ENCODE measurements at regions of chr6 and their contacts with region 1.

Region 1: GRCh38 chr6:159778542-159779103 is 10.8 kb downstream of the TCP1 start:
- DNase-seq: no peak
- ATAC-seq: no peak
- H3K4me3 Mint-ChIP-seq: no peak overlapping the region
- H3K27ac Mint-ChIP-seq: no peak overlapping the region
- H3K4me1 Mint-ChIP-seq: no peaks in the 10 kb centered on the region
- H3K27me3 Mint-ChIP-seq: no peaks in the 10 kb centered on the region
- CTCF ChIP-seq: no peak

Region 2: DNA sequence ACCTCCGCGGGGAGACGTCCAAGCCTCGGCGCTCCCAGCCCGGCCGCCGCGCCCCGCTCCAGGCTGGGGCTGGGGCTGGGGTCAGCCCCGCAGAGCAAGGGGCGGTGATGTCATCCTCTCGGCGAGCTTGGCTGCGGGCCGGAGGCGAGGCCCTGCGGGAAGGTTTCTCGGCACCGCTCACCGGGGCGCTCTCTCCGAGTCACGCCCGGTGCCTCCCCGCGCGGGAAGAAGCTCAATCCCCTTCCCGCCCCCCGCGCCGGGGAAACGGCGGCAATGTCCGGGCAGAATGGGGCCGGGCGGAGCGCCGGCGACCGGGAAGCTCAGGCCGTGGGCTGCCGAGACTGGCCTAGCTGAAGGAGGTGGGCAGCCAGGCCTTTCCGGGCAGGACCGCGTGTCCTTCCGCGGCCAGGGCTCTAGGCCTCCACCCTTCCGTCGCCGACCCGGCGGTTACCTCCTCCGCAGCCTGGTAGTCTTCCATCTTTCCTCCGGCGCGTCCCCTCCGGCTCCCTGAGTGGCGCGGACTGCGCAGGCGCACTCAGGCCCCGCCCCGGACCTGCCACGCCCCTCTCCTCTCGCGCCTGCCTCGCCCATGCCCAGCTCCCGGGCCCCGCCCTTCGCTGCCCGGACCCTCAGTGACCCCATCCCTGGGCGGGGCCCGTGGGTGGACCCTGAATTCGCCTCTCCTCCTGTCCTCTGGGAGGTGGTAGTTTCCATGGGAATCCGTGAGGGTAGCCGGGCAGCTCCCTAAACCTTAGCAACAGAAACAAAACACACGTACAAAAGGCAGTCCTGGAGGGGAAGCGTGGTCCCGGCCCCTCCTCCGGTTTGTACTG is 1134.2 kb before region 1 on chr6 and contains the start of gene DYNLT1:
- CTCF ChIA-PET with region 1: no interaction called
- POLR2A ChIA-PET with region 1: no interaction called
- intact Hi-C with region 1: no loop called
- DNase-seq: peak; percentile 97
- ATAC-seq: peak; percentile 68
- H3K4me3 Mint-ChIP-seq: peak within 1 kb of the TSS; percentile 95
- H3K27ac Mint-ChIP-seq: peak within 1 kb of the TSS; percentile 85
- H3K4me1 Mint-ChIP-seq: peaks cover 52% of the 10 kb centered on the region
- H3K27me3 Mint-ChIP-seq: no peaks in the 10 kb centered on the region
- CTCF ChIP-seq: no peak
- total RNA-seq, gene DYNLT1: 37.7 and 43.9 TPM in 2 replicates

Region 3: GRCh38 chr6:159422041-159422984 is 356.3 kb before region 1 on chr6:
- CTCF ChIA-PET with region 1: no interaction called
- POLR2A ChIA-PET with region 1: no interaction called
- intact Hi-C with region 1: no loop called
- DNase-seq: no peak
- ATAC-seq: no peak
- H3K4me3 Mint-ChIP-seq: no peak overlapping the region
- H3K27ac Mint-ChIP-seq: no peak overlapping the region
- H3K4me1 Mint-ChIP-seq: no peaks in the 10 kb centered on the region
- H3K27me3 Mint-ChIP-seq: peaks cover 14% of the 10 kb centered on the region
- CTCF ChIP-seq: no peak

Region 4: GRCh38 chr6:159761873-159762680 is 16.5 kb before region 1 on chr6 and contains the start of gene ACAT2:
- CTCF ChIA-PET with region 1: no interaction called
- POLR2A ChIA-PET with region 1: interaction called, 3 read pairs
- intact Hi-C with region 1: loop called (anchors 2 kb)
- DNase-seq: peak; percentile 85
- ATAC-seq: peak; percentile 95
- H3K4me3 Mint-ChIP-seq: peak within 1 kb of the TSS; percentile 96
- H3K27ac Mint-ChIP-seq: peak within 1 kb of the TSS; percentile 94
- H3K4me1 Mint-ChIP-seq: peaks cover 18% of the 10 kb centered on the region
- H3K27me3 Mint-ChIP-seq: no peaks in the 10 kb centered on the region
- CTCF ChIP-seq: no peak
- total RNA-seq, gene ACAT2: 82.0 and 87.9 TPM in 2 replicates

Measured in activated B cell treated with CpG ODN at 0.5 μM for 24 hours (primary cell).